ENCODE measurements at regions of chr1 and their contacts with region 1.

Region 1: GRCh38 chr1:100459358-100460114 is 78.4 kb upstream of the GPR88 start:
- DNase-seq: peak; percentile 87
- H3K4me3 ChIP-seq: no peak overlapping the region
- H3K27ac ChIP-seq: no peak overlapping the region
- H3K4me1 ChIP-seq: peaks cover 4% of the 10 kb centered on the region
- H3K27me3 ChIP-seq: no peaks in the 10 kb centered on the region
- CTCF ChIP-seq: peak; percentile 76 to 83
- POLR2A ChIP-seq: no peak

Region 2: GRCh38 chr1:99969729-99970621 is 489.6 kb before region 1 on chr1 and contains the start of gene SLC35A3:
- CTCF ChIA-PET with region 1: interaction called, 4 read pairs
- POLR2A ChIA-PET with region 1: no interaction called
- dilution Hi-C with region 1: no loop called
- intact Hi-C with region 1: loop called (anchors 10 kb)
- DNase-seq: peak; percentile 68
- H3K4me3 ChIP-seq: peak within 1 kb of the TSS; percentile 62 to 91 (median 69)
- H3K27ac ChIP-seq: peak within 1 kb of the TSS; percentile 25
- H3K4me1 ChIP-seq: peaks cover 11% of the 10 kb centered on the region
- H3K27me3 ChIP-seq: no peaks in the 10 kb centered on the region
- CTCF ChIP-seq: no peak
- POLR2A ChIP-seq: no peak
- total RNA-seq, gene SLC35A3: 19.0 and 20.2 TPM in 2 replicates

Region 3: GRCh38 chr1:100132566-100133477 is 326.7 kb before region 1 on chr1 and contains the starts of genes SASS6 and TRMT13:
- CTCF ChIA-PET with region 1: interaction called, 11 read pairs
- POLR2A ChIA-PET with region 1: no interaction called
- dilution Hi-C with region 1: no loop called
- intact Hi-C with region 1: loop called (anchors 2 kb)
- DNase-seq: peak; percentile 97
- H3K4me3 ChIP-seq: peak within 1 kb of the TSS; percentile 61 to 99 (median 85)
- H3K27ac ChIP-seq: peak within 1 kb of the TSS; percentile 58
- H3K4me1 ChIP-seq: peaks cover 24% of the 10 kb centered on the region
- H3K27me3 ChIP-seq: no peaks in the 10 kb centered on the region
- CTCF ChIP-seq: no peak
- POLR2A ChIP-seq: peak; percentile 80
- total RNA-seq, gene SASS6: 6.5 and 7.3 TPM in 2 replicates
- total RNA-seq, gene TRMT13: 12.7 and 14.1 TPM in 2 replicates

Region 4: GRCh38 chr1:100292711-100293110 is 166.8 kb before region 1 on chr1:
- CTCF ChIA-PET with region 1: interaction called, 73 read pairs
- POLR2A ChIA-PET with region 1: no interaction called
- dilution Hi-C with region 1: no loop called
- intact Hi-C with region 1: loop called (anchors 1 kb)
- DNase-seq: peak; percentile 96
- H3K4me3 ChIP-seq: no peak overlapping the region
- H3K27ac ChIP-seq: peak overlapping the region; percentile 97
- H3K4me1 ChIP-seq: peaks cover 43% of the 10 kb centered on the region
- H3K27me3 ChIP-seq: no peaks in the 10 kb centered on the region
- CTCF ChIP-seq: no peak
- POLR2A ChIP-seq: peak; percentile 82

Region 5: DNA sequence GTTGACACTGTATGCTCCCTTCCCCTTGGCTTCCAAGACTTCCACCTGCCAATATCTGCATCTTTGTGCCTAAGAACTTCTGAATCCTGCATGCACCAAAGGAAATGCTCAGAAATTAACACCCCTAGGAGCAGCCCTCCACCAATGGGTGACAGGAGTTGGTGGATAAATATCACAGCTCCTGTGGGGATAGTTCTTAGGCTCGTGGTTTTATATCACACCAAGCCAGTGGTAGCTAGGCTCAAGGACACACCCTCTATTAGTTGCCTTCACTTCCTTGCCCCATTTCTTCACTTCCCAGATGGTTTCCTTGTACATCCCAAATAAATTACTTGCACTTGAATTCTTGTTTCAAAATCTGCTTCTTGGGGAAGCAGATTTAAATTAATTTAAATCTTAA is 124.1 kb before region 1 on chr1:
- CTCF ChIA-PET with region 1: no interaction called
- POLR2A ChIA-PET with region 1: no interaction called
- dilution Hi-C with region 1: no loop called
- intact Hi-C with region 1: no loop called
- DNase-seq: no peak
- H3K4me3 ChIP-seq: no peak overlapping the region
- H3K27ac ChIP-seq: no peak overlapping the region
- H3K4me1 ChIP-seq: no peaks in the 10 kb centered on the region
- H3K27me3 ChIP-seq: no peaks in the 10 kb centered on the region
- CTCF ChIP-seq: no peak
- POLR2A ChIP-seq: no peak

Region 6: GRCh38 chr1:100443811-100444571 is 15.5 kb before region 1 on chr1:
- CTCF ChIA-PET with region 1: interaction called, 44 read pairs
- POLR2A ChIA-PET with region 1: no interaction called
- dilution Hi-C with region 1: no loop called
- intact Hi-C with region 1: no loop called
- DNase-seq: peak; percentile 74
- H3K4me3 ChIP-seq: peak overlapping the region in 1 of 3 experiments; percentile 3
- H3K27ac ChIP-seq: peak overlapping the region; percentile 87
- H3K4me1 ChIP-seq: peaks cover 38% of the 10 kb centered on the region
- H3K27me3 ChIP-seq: no peaks in the 10 kb centered on the region
- CTCF ChIP-seq: no peak
- POLR2A ChIP-seq: no peak

Region 7: GRCh38 chr1:100643471-100644196 is 184.1 kb after region 1 on chr1:
- CTCF ChIA-PET with region 1: no interaction called
- POLR2A ChIA-PET with region 1: no interaction called
- dilution Hi-C with region 1: no loop called
- intact Hi-C with region 1: no loop called
- DNase-seq: peak; percentile 70
- H3K4me3 ChIP-seq: no peak overlapping the region
- H3K27ac ChIP-seq: no peak overlapping the region
- H3K4me1 ChIP-seq: peaks cover 7% of the 10 kb centered on the region
- H3K27me3 ChIP-seq: no peaks in the 10 kb centered on the region
- CTCF ChIP-seq: no peak
- POLR2A ChIP-seq: no peak

Region 8: GRCh38 chr1:100875228-100875627 is 415.7 kb after region 1 on chr1:
- CTCF ChIA-PET with region 1: interaction called, 261 read pairs
- POLR2A ChIA-PET with region 1: no interaction called
- dilution Hi-C with region 1: loop called (anchors 10 kb)
- intact Hi-C with region 1: no loop called
- DNase-seq: no peak
- H3K4me3 ChIP-seq: no peak overlapping the region
- H3K27ac ChIP-seq: no peak overlapping the region
- H3K4me1 ChIP-seq: no peaks in the 10 kb centered on the region
- H3K27me3 ChIP-seq: no peaks in the 10 kb centered on the region
- CTCF ChIP-seq: no peak
- POLR2A ChIP-seq: no peak

Region 9: DNA sequence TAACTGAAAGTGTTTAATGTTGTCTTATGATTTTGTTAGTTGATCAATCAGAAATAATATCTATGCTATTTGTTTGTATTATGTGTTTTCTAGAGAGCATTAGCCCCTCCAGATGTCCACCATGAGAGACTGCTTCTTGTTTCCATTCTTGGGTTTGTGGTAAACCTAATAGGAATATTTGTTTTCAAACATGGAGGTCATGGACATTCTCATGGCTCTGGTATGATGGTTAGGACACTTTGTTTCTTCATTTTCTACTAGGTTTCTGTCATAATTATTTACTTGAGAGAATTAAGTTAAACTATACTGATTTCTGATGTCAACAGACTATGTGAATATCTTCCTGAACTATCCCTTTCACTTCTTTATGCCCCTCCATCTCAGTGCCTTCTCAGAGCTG is 452.5 kb after region 1 on chr1:
- CTCF ChIA-PET with region 1: no interaction called
- POLR2A ChIA-PET with region 1: no interaction called
- dilution Hi-C with region 1: no loop called
- intact Hi-C with region 1: no loop called
- DNase-seq: no peak
- H3K4me3 ChIP-seq: no peak overlapping the region
- H3K27ac ChIP-seq: no peak overlapping the region
- H3K4me1 ChIP-seq: no peaks in the 10 kb centered on the region
- H3K27me3 ChIP-seq: no peaks in the 10 kb centered on the region
- CTCF ChIP-seq: no peak
- POLR2A ChIP-seq: no peak

Measured in endothelial cell of umbilical vein (primary cell).